ENCODE measurements at regions of chr3 and their contacts with region 1.

Region 1: DNA sequence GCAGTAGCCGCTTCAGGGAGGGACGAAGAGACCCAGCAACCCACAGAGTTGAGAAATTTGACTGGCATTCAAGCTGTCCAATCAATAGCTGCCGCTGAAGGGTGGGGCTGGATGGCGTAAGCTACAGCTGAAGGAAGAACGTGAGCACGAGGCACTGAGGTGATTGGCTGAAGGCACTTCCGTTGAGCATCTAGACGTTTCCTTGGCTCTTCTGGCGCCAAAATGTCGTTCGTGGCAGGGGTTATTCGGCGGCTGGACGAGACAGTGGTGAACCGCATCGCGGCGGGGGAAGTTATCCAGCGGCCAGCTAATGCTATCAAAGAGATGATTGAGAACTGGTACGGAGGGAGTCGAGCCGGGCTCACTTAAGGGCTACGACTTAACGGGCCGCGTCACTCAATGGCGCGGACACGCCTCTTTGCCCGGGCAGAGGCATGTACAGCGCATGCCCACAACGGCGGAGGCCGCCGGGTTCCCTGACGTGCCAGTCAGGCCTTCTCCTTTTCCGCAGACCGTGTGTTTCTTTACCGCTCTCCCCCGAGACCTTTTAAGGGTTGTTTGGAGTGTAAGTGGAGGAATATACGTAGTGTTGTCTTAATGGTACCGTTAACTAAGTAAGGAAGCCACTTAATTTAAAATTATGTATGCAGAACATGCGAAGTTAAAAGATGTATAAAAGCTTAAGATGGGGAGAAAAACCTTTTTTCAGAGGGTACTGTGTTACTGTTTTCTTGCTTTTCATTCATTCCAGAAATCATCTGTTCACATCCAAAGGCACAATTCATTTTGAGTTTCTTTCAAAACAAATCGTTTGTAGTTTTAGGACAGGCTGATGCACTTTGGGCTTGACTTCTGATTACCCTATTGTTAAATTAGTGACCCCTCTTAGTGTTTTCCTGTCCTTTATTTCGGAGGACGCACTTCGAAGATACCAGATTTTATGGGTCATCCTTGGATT is at the start of gene MLH1:
- DNase-seq: peak; percentile 94 to 97 (median 95)
- ATAC-seq: peak; percentile 94 to 97 (median 96)
- H3K4me3 ChIP-seq: peak within 1 kb of the TSS; percentile 57 to 83 (median 70)
- H3K27ac ChIP-seq: peak within 1 kb of the TSS; percentile 93 to 99 (median 98)
- H3K4me1 ChIP-seq: peaks cover 7 to 65% (median 48%) of the 10 kb centered on the region in 12 donors
- H3K27me3 ChIP-seq: no peaks in the 10 kb centered on the region
- CTCF ChIP-seq: no peak
- POLR2A ChIP-seq: peak in 1 of 2 donors; percentile 64
- total RNA-seq, gene MLH1: 44.5 to 58.4 (median 50.4) TPM

Region 2: GRCh38 chr3:36679384-36680200 is 314.0 kb before region 1 on chr3:
- intact Hi-C with region 1: no loop called
- DNase-seq: no peak
- ATAC-seq: no peak
- H3K4me3 ChIP-seq: no peak overlapping the region
- H3K27ac ChIP-seq: no peak overlapping the region
- H3K4me1 ChIP-seq: no peaks in the 10 kb centered on the region
- H3K27me3 ChIP-seq: no peaks in the 10 kb centered on the region
- CTCF ChIP-seq: no peak
- POLR2A ChIP-seq: no peak

Region 3: GRCh38 chr3:37096288-37096687 is 102.7 kb after region 1 on chr3:
- intact Hi-C with region 1: loop called in 1 of 10 experiments (anchors 10 kb)
- DNase-seq: no peak
- ATAC-seq: peak in 2 of 4 donors; percentile 30 to 54
- H3K4me3 ChIP-seq: no peak overlapping the region
- H3K27ac ChIP-seq: peak overlapping the region in 10 of 12 donors; percentile 27 to 64 (median 32)
- H3K4me1 ChIP-seq: peaks cover 0 to 37% (median 19%) of the 10 kb centered on the region in 12 donors
- H3K27me3 ChIP-seq: no peaks in the 10 kb centered on the region
- CTCF ChIP-seq: no peak
- POLR2A ChIP-seq: no peak

Measured in heart left ventricle (tissue), 16 donors.